Mammary epithelial cell (primary cell): ENCODE measurements at regions of chr16 and their contacts with region 1.

Region 1: GRCh38 chr16:13919683-13920509 is at the start of gene ERCC4:
- DNase-seq: peak; percentile 98
- H3K4me3 ChIP-seq: peak within 1 kb of the TSS; percentile 70 to 99 (median 87)
- H3K27ac ChIP-seq: peak within 1 kb of the TSS; percentile 60
- H3K4me1 ChIP-seq: peaks cover 8% of the 10 kb centered on the region
- H3K27me3 ChIP-seq: no peaks in the 10 kb centered on the region
- CTCF ChIP-seq: peak; percentile 94 to 97
- total RNA-seq, gene ERCC4: 9.7 to 13.1 TPM

Region 2: GRCh38 chr16:12095275-12096156 is 1824.4 kb before region 1 on chr16:
- CTCF ChIA-PET with region 1: no interaction called
- dilution Hi-C with region 1: no loop called
- in situ Hi-C with region 1: no loop called
- intact Hi-C with region 1: loop called (anchors 2 kb)
- DNase-seq: peak; percentile 10
- H3K4me3 ChIP-seq: no peak overlapping the region
- H3K27ac ChIP-seq: no peak overlapping the region
- H3K4me1 ChIP-seq: no peaks in the 10 kb centered on the region
- H3K27me3 ChIP-seq: no peaks in the 10 kb centered on the region
- CTCF ChIP-seq: peak; percentile 87

Region 3: DNA sequence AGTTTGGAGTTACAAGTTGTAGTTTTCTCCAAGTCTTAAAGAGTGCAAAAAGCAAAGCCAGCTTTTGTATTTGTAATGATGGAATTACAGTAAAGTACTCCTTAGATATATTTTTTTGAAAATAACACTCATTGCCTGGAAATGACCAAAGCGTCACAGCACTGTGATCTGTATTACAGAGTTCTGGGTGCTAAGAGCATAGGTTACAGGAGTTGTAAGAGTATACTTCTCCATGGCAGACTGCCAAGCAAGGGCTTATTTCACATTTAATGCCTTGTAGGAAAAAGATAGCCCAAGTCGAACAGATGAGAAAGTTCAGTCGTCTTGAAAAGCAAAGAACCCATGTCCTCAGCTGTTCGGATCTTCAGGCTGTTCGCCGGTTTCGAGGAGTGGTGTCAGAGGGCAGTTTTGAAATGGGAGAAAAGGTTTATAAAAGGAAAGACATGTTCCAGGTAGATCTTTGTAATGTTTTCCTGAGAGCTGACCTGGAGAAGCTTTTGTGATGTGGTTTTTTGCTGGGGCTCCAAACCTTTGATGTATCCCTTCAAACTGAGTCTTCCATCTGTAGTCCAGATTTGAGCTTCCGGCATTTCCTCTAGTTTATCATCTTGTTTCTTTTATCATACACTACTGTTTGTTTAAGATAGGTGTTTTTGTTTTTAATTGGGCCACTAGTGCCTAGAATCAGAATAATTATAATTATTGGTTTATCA is 41.4 kb after region 1 on chr16:
- CTCF ChIA-PET with region 1: no interaction called
- dilution Hi-C with region 1: no loop called
- in situ Hi-C with region 1: no loop called
- intact Hi-C with region 1: no loop called
- DNase-seq: no peak
- H3K4me3 ChIP-seq: no peak overlapping the region
- H3K27ac ChIP-seq: no peak overlapping the region
- H3K4me1 ChIP-seq: peaks cover 21% of the 10 kb centered on the region
- H3K27me3 ChIP-seq: peaks cover 3% of the 10 kb centered on the region
- CTCF ChIP-seq: no peak

Region 4: GRCh38 chr16:14003074-14003570 is 83.2 kb after region 1 on chr16:
- CTCF ChIA-PET with region 1: no interaction called
- dilution Hi-C with region 1: no loop called
- in situ Hi-C with region 1: no loop called
- intact Hi-C with region 1: loop called (anchors 10 kb)
- DNase-seq: peak; percentile 77
- H3K4me3 ChIP-seq: peak overlapping the region in 2 of 3 experiments; percentile 19 to 25
- H3K27ac ChIP-seq: no peak overlapping the region
- H3K4me1 ChIP-seq: peaks cover 14% of the 10 kb centered on the region
- H3K27me3 ChIP-seq: no peaks in the 10 kb centered on the region
- CTCF ChIP-seq: no peak

Region 5: GRCh38 chr16:14028202-14028601 is 108.3 kb after region 1 on chr16:
- CTCF ChIA-PET with region 1: no interaction called
- dilution Hi-C with region 1: no loop called
- in situ Hi-C with region 1: no loop called
- intact Hi-C with region 1: no loop called
- DNase-seq: no peak
- H3K4me3 ChIP-seq: no peak overlapping the region
- H3K27ac ChIP-seq: no peak overlapping the region
- H3K4me1 ChIP-seq: no peaks in the 10 kb centered on the region
- H3K27me3 ChIP-seq: no peaks in the 10 kb centered on the region
- CTCF ChIP-seq: no peak

Region 6: DNA sequence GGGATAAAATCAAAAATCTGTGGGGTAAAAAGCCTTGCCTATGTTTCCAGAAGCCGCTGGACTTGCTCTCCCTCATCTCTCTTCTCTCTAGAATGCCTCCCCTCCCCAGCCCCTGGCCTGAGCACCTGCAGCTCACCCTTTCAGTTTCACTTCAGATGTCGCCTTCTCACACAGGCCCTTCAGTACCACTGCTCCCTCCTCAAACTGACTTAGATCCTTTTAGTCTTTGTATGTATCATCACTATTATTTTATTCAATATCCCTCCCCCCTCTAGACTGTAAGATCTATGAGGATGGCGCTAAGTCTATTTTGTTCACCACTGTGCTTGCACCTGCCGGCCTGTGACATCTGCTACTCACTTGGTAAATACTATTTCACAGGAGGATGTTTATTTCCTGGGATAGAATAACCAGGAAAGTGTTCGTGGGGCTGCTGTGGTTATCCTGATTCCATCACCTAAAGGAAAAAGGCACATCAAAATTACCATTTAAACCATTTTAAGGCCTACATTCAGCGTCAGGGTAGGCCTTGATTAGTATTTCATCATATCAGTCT is 273.5 kb after region 1 on chr16:
- CTCF ChIA-PET with region 1: no interaction called
- dilution Hi-C with region 1: no loop called
- in situ Hi-C with region 1: no loop called
- intact Hi-C with region 1: loop called (anchors 5 kb)
- DNase-seq: no peak
- H3K4me3 ChIP-seq: no peak overlapping the region
- H3K27ac ChIP-seq: no peak overlapping the region
- H3K4me1 ChIP-seq: no peaks in the 10 kb centered on the region
- H3K27me3 ChIP-seq: no peaks in the 10 kb centered on the region
- CTCF ChIP-seq: no peak

Region 7: DNA sequence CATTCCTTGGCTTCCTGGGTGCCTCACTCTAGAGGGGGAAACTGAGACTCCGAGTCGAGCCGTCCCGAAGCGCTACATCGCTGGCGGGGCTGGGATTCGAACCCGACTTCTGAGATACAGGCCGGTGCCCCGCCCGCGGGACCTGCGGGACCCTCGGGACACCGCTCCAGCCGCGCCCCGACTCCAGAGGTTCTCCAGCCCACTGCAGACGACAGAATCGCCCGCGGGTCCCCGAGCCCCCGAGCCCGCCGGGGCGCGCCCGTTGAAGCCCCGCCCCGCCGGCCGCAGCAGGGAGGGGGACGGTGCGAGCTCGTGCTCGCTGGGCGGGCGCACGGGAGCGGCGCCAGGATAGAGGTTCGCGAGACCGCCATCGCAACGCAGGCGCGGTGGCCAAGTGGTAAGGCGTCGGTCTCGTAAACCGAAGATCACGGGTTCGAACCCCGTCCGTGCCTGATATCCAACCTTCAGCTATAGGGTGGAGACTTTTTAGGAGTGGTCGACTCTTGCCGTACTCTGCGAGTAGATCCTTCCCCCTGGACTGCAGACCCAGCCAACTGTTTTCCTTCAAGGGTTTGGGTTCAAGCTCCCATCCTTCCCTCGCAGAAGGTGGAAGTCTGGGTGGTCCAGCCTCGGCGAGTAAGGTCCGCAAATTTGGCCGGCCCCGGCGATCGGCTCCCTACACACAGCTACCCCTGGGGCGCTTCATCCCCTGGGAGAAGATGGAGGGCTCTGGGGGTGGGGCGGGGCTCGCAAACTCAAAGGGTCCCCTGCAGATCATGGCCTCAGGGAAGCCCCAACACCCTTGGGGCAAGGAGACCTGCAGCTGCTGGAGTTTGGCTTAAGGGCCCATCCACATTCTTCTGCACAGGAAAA is 365.9 kb after region 1 on chr16:
- CTCF ChIA-PET with region 1: interaction called, 7 read pairs
- dilution Hi-C with region 1: no loop called
- in situ Hi-C with region 1: loop called (anchors 5 to 10 kb)
- intact Hi-C with region 1: loop called (anchors 1 kb)
- DNase-seq: peak; percentile 88
- H3K4me3 ChIP-seq: peak overlapping the region; percentile 77 to 94 (median 87)
- H3K27ac ChIP-seq: peak overlapping the region; percentile 31
- H3K4me1 ChIP-seq: peaks cover 6% of the 10 kb centered on the region
- H3K27me3 ChIP-seq: no peaks in the 10 kb centered on the region
- CTCF ChIP-seq: no peak

Region 8: DNA sequence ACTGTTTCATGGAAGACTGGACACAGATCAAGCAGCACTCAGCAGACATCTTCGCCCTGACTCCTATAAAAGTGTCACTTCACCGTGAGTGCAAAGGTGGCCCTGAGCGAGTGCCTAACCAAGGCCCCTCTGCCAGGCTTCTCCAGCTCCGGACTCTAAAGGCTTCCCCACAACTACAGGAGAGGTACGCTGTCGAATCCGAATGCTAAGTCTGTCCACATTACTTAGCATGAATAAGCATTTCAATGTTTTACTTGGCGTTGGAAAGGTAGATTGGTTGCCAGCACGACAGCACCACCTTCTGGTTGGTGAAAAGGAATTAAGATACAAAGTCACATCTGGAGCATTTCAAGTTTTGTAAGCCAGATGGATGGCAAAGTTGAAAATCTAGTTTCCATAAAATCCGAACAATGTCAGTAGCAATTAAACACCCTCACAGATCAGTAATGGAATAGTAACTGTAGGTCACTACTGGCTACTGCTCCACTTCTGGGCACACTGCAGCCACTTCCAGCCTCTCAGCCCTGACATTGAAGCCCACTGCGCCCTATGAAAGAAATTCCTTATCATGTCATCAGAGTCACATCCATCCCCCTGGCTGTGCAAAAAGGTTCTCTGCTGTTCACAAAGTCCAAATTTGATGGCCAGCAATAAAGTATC is 609.2 kb after region 1 on chr16:
- CTCF ChIA-PET with region 1: no interaction called
- dilution Hi-C with region 1: no loop called
- in situ Hi-C with region 1: loop called (anchors 5 to 25 kb)
- intact Hi-C with region 1: loop called (anchors 1 kb)
- DNase-seq: peak; percentile 82
- H3K4me3 ChIP-seq: no peak overlapping the region
- H3K27ac ChIP-seq: peak overlapping the region; percentile 47
- H3K4me1 ChIP-seq: peaks cover 16% of the 10 kb centered on the region
- H3K27me3 ChIP-seq: no peaks in the 10 kb centered on the region
- CTCF ChIP-seq: peak; percentile 78 to 83